ENCODE measurements at regions of chr3 and their contacts with region 1.

Region 1: GRCh38 chr3:140922634-140923033 is 19.0 kb upstream of the SLC25A36 start:
- DNase-seq: no peak

Region 2: GRCh38 chr3:140956058-140956835 is 33.6 kb after region 1 on chr3:
- intact Hi-C with region 1: loop called (anchors 5 kb)
- DNase-seq: no peak

Region 3: GRCh38 chr3:140972833-140973232 is 50.2 kb after region 1 on chr3:
- intact Hi-C with region 1: loop called (anchors 5 kb)
- DNase-seq: no peak

Region 4: GRCh38 chr3:141094790-141095545 is 172.3 kb after region 1 on chr3:
- intact Hi-C with region 1: no loop called
- DNase-seq: peak; percentile 87

Measured in cardiac septum (tissue), 1 donor.